ENCODE measurements at regions of chr3 and their contacts with region 1.

Region 1: GRCh38 chr3:120678331-120678947 is 3.6 kb downstream of the HGD start:
- DNase-seq: peak; percentile 74 to 90
- ATAC-seq: peak; percentile 82 to 87
- H3K4me3 ChIP-seq: peak overlapping the region; percentile 50
- H3K27ac ChIP-seq: peak overlapping the region; percentile 94 to 95
- H3K4me1 ChIP-seq: peaks cover 58% of the 10 kb centered on the region
- CTCF ChIP-seq: no peak
- EP300 ChIP-seq: peak in 1 of 2 experiments; percentile 64; a peak in 2 of 5 replicates
- POLR2A ChIP-seq: no peak
- RAD21 ChIP-seq: peak; percentile 8 to 39; a peak in 2 of 5 replicates

Region 2: GRCh38 chr3:120742198-120742849 is 63.9 kb after region 1 on chr3 and contains the starts of genes GTF2E1 and RABL3:
- CTCF ChIA-PET with region 1: no interaction called
- POLR2A ChIA-PET with region 1: interaction called, 10 read pairs
- DNase-seq: peak; percentile 99
- ATAC-seq: peak; percentile 99
- H3K4me3 ChIP-seq: peak within 1 kb of the TSS; percentile 95
- H3K27ac ChIP-seq: peak within 1 kb of the TSS; percentile 91 to 93
- H3K4me1 ChIP-seq: peaks cover 10% of the 10 kb centered on the region
- CTCF ChIP-seq: no peak
- EP300 ChIP-seq: no peak
- POLR2A ChIP-seq: peak; percentile 33
- RAD21 ChIP-seq: no peak
- polyA plus RNA-seq, gene GTF2E1: 20.0 and 26.8 TPM in 2 replicates
- polyA plus RNA-seq, gene RABL3: 14.0 and 17.6 TPM in 2 replicates